Left cardiac atrium (tissue), 4 donors: ENCODE measurements at regions of chr20 and their contacts with region 1.

Region 1: DNA sequence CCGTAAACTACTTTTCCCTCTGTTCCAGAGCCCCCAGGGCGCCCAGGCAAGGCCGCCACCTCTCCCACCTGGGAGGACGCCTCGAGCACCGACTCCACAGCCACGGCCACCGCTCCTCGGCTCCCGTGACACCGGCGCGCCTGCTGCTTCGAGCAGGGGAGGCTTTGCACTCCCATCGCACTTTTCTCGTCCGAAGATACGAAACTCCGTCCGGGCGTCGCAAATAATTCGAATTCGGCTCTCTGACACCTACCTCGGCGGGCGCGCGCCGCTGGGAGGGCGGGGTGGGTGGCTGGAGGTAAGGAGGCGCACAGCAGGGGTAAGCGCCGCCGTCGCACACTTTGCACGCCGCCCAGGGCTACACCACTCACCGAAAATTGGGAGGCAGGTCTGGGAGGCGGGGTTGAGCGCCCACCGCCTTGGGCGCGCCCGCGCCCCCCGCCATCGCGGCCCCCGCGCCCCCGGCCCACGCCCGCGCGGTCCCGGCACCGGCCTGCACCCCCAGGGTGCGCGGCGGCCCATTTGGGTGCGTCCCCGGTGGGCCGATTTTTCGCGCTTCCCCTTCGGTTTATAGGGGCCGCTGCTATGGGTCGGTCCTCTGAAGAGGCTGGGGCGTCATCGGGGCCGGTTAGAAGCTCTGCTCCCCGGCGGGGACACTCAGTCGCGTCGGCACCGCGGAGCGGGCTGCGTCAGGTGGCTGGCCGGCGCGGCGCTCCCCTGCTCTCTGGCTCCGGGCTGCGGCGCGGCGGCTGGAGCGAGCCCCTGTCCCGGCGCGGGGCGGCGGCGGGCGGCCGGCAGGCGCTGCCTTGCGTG is 36.2 kb downstream of the GNAS start:
- DNase-seq: peak; percentile 86
- ATAC-seq: peak; percentile 51 to 54

Region 2: GRCh38 chr20:58481481-58482021 is 407.2 kb before region 1 on chr20:
- intact Hi-C with region 1: no loop called
- DNase-seq: peak; percentile 63
- ATAC-seq: peak; percentile 72 to 76

Region 3: GRCh38 chr20:58839474-58839874 is 49.3 kb before region 1 on chr20:
- intact Hi-C with region 1: no loop called
- DNase-seq: peak; percentile 53
- ATAC-seq: peak; percentile 73 to 77

Region 4: DNA sequence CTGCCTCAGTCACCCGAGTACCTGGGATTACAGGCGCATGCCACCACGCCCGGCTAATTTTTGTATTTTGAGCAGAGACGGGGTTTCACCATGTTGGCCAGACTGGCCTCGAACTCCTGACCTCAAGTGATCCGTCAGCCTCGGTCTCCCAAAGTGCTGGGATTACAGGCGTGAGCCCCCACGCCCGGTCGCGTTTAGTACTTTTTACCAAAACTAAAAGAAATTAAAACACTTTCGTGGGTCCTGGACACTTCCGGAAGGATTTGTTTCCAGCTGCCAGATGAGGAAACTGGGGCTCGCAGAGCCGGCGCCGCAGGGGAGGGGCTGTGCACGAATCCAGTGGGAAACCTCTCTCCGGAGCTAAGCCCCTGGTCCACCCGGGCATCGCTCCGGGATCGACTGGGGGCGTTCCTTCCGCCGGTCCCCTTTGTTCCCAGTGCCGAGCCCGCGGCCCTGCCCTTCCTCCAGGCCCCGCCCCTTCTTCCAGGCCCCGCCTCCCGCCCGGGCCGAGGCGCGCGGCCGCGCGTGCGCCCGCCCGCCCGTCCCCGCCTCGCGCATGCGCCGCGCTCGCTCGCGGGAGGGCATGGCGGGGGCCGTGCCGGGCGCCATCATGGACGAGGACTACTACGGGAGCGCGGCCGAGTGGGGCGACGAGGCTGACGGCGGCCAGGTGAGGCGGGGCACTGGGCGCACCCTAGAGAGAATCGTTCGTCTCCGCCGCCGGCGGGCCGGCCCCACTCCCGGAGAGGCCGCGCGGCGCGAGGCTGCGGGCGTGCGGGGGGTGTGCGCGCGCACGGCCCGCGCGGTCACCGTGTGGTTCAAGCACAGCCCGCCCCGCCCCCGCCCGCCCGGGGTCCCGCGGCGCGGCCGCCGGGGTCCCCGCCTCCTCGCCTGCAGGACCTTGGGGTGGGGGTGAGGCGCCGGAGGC is 92.2 kb after region 1 on chr20 and contains the start of gene NELFCD:
- intact Hi-C with region 1: loop called in 1 of 2 experiments (anchors 10 kb)
- DNase-seq: peak; percentile 86
- ATAC-seq: peak; percentile 93 to 96
- total RNA-seq, gene NELFCD: 28.7 to 34.1 TPM

Region 5: GRCh38 chr20:59032023-59032712 is 143.4 kb after region 1 on chr20 and contains the start of gene ATP5F1E:
- intact Hi-C with region 1: loop called in 1 of 2 experiments (anchors 5 kb)
- DNase-seq: peak; percentile 98
- ATAC-seq: peak; percentile 100
- total RNA-seq, gene ATP5F1E: 122 to 125 TPM

Region 6: GRCh38 chr20:59042796-59043660 is 154.3 kb after region 1 on chr20:
- intact Hi-C with region 1: loop called in 1 of 2 experiments (anchors 10 kb)
- DNase-seq: peak; percentile 96
- ATAC-seq: peak; percentile 98 to 99